ENCODE measurements at regions of chr10 and their contacts with region 1.

Region 1: DNA sequence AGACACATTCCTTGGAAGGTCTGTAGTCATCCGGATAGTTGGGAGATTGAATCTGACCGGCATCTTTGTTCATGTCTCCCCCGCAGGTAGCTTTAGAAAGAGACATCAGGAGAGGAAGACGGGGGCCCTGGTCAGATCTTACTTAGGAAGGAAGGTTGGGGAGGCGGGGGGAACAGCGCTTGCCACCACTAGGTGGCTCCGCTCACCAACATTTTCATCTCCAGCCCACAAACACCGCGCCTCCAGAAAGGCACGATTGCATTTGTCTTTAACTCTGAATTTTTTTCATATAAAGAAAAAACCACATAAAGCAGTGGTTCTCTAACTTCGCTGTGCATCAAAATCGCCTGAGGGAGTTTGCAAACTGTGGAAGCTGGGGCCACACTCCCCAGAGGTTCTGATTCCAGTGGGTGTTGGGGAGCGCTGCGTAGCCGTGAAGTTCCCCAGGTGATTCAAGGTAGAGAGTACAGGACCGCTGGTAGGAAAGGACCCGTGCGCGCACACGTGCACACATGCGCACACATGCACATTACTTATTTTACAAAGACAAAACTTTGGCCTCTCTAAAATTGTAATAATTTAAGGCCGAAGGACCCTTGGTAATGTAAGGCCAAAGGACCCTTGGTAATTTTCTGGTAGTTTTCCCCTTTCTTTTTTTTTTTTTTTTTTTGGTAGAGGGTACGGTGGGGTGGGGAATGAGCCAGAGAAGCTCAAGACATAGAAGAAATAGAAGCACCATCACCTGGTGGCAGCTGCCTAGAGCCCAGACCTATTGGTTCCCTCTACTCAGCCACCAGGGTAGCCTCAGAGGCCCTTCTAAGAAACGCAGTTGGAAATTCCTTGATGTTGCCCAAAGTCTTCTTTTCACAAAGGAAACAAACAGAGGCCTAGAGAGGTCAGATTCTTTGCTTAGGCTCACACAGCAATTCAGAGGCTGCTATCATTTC is 37.4 kb upstream of the OPALIN start:
- DNase-seq: peak; percentile 63
- H3K4me3 ChIP-seq: no peak overlapping the region
- H3K27ac ChIP-seq: no peak overlapping the region
- H3K4me1 ChIP-seq: no peaks in the 10 kb centered on the region
- H3K27me3 ChIP-seq: peaks cover 4% of the 10 kb centered on the region
- CTCF ChIP-seq: peak; percentile 69 to 84 (median 78)
- POLR2A ChIP-seq: no peak

Region 2: GRCh38 chr10:96431211-96431970 is 35.2 kb after region 1 on chr10:
- intact Hi-C with region 1: no loop called
- DNase-seq: no peak
- H3K4me3 ChIP-seq: no peak overlapping the region
- H3K27ac ChIP-seq: no peak overlapping the region
- H3K4me1 ChIP-seq: no peaks in the 10 kb centered on the region
- H3K27me3 ChIP-seq: no peaks in the 10 kb centered on the region
- CTCF ChIP-seq: no peak
- POLR2A ChIP-seq: no peak

Region 3: DNA sequence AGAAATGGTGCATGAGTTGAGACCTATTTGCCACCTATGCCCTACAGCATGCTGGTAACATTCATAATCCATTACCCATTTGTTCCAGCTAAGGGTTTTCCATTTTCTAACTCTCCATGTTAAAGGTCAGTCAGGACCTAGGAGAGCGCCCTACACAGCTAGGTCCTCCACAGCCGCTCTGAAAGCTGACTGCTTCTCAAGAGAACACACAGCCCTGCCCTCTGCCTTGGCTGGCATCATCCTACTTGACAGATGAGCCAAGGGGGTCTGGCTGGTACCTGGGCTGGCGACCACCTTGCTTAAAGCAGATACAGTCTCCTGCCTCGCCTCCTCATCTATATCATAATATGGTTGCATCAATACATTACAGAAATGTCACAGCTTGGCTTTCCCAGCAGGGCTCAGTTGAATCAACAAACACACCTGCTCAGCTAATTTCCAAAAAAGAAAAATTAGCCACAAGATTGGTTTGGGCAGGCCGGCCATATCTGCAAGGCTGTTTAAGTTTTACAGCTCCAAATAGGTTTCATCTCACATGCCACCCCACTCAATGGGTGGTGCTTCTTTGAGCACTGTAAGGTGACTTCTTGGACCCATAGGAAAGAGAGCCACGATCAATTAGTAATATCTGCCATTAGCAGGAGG is 100.2 kb after region 1 on chr10:
- intact Hi-C with region 1: no loop called
- DNase-seq: no peak
- H3K4me3 ChIP-seq: no peak overlapping the region
- H3K27ac ChIP-seq: no peak overlapping the region
- H3K4me1 ChIP-seq: no peaks in the 10 kb centered on the region
- H3K27me3 ChIP-seq: no peaks in the 10 kb centered on the region
- CTCF ChIP-seq: no peak
- POLR2A ChIP-seq: no peak

Region 4: DNA sequence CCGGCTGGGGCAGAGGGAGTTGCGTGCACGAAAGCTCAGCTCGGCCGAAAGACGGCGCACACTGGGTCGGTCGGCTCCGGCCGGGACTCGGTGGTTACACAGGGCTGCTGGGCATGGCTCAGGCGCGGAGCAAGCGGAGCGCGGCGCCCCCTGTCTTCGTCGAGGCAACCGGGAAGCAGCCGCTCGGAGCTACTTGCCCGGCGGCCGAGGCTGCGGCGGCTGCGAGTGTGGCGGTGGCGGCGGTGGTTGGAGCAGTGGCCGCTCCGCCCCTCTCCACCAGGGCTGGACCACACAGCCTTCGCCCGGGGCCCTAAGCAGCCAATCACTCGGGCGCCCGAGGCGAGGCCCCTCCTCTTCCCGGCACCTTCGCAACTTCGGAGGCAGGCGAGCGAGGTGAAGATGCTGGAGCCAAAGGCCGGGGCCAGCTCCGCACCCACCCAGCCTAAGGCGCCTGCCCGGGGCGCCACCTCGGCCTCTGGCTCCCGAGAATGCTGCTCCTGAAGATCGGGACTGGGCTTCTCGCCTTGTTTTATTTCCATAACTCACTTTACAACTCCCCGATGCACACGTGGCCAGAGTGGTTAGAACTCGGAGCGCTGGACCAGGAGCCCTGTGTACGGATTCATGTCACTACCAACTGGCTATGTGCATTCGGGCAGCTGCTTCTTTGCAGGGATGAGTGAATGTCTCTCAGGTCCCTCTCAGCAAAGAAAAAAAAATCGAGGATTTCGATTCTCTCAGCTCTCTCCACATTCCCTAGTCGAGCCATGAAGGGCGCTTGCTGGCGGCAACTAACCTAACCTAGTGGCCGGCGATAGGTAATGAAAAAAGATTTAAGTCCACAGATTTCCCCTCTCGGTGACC is 117.7 kb after region 1 on chr10 and contains the start of gene TLL2:
- intact Hi-C with region 1: loop called (anchors 5 kb)
- DNase-seq: peak; percentile 87
- H3K4me3 ChIP-seq: peak within 1 kb of the TSS; percentile 29 to 49
- H3K27ac ChIP-seq: peak within 1 kb of the TSS in 1 of 2 donors; percentile 18
- H3K4me1 ChIP-seq: no peaks in the 10 kb centered on the region
- H3K27me3 ChIP-seq: no peaks in the 10 kb centered on the region
- CTCF ChIP-seq: peak; percentile 19 to 90 (median 84)
- POLR2A ChIP-seq: peak; percentile 43
- total RNA-seq, gene TLL2: 0.28 to 0.32 TPM

Region 5: GRCh38 chr10:96565774-96566173 is 169.6 kb after region 1 on chr10:
- intact Hi-C with region 1: no loop called
- DNase-seq: no peak
- H3K4me3 ChIP-seq: no peak overlapping the region
- H3K27ac ChIP-seq: no peak overlapping the region
- H3K4me1 ChIP-seq: peaks cover 11% of the 10 kb centered on the region
- H3K27me3 ChIP-seq: no peaks in the 10 kb centered on the region
- CTCF ChIP-seq: no peak
- POLR2A ChIP-seq: no peak

Region 6: GRCh38 chr10:96626795-96627194 is 230.6 kb after region 1 on chr10:
- intact Hi-C with region 1: loop called (anchors 10 kb)
- DNase-seq: no peak
- H3K4me3 ChIP-seq: no peak overlapping the region
- H3K27ac ChIP-seq: no peak overlapping the region
- H3K4me1 ChIP-seq: no peaks in the 10 kb centered on the region
- H3K27me3 ChIP-seq: no peaks in the 10 kb centered on the region
- CTCF ChIP-seq: no peak
- POLR2A ChIP-seq: no peak

Region 7: DNA sequence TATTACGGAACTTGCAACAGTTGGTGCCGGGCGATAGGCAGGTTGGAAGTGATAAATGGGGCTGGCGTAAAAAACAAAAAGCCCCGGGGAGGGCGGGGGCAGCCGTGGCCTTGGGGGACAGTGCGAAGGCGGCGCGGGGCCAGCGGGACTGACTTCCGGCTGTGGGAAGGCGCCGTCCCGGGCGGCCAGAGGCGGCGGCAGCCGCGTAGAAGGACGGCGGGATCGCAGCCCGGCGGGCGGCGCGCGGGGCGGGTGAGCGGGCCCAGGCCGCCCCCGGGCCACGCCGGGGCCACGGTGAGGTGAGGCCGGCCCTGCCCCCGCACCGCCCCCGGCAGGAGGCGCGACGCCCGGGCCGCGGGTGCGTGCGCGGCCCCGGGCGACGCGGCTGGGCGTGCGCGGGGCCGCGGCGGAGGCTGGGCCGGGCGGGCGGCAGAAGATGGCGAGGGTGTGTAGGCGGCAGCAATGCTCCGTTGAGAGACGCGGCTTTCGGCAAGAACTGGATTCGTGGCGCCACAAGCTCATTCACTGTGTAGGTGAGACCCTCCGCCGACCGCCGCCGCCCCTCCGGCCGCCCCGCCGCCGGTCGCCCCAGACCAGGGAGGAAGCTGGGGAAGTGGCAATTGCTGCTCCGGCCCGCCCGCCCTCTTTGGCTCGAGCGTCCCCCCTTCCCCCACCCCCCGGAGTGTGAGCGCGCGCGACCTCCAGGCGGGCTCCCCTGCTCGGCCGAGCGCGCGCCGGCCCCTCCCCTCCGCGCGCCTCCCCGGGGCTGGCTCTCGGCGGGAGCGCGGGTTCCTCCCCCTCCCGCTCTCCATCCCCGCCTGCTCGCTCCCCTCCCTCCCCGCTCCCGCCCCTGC is 435.9 kb after region 1 on chr10 and contains the start of gene LCOR:
- intact Hi-C with region 1: loop called (anchors 5 kb)
- DNase-seq: peak; percentile 78
- H3K4me3 ChIP-seq: peak within 1 kb of the TSS; percentile 85 to 97
- H3K27ac ChIP-seq: peak within 1 kb of the TSS; percentile 95 to 96
- H3K4me1 ChIP-seq: no peaks in the 10 kb centered on the region
- H3K27me3 ChIP-seq: no peaks in the 10 kb centered on the region
- CTCF ChIP-seq: no peak
- POLR2A ChIP-seq: peak; percentile 61
- total RNA-seq, gene LCOR: 32.8 to 40.0 TPM